Mucosa of descending colon (tissue), 3 donors: ENCODE measurements at regions of chr2 and their contacts with region 1.

Region 1: GRCh38 chr2:16613539-16614011 is 52.1 kb downstream of the CYRIA start:
- DNase-seq: no peak
- ATAC-seq: no peak
- H3K4me3 ChIP-seq: no peak overlapping the region
- H3K4me1 ChIP-seq: no peaks in the 10 kb centered on the region
- CTCF ChIP-seq: no peak

Region 2: GRCh38 chr2:16756831-16757644 is 143.5 kb after region 1 on chr2:
- intact Hi-C with region 1: loop called (anchors 5 to 10 kb)
- DNase-seq: peak; percentile 71 to 74 (median 72)
- ATAC-seq: peak; percentile 93
- H3K4me3 ChIP-seq: no peak overlapping the region
- H3K4me1 ChIP-seq: no peaks in the 10 kb centered on the region
- CTCF ChIP-seq: peak; percentile 55